ENCODE measurements at regions of chr12 and their contacts with region 1.

Region 1: GRCh38 chr12:104215638-104216297 is at the start of gene TXNRD1:
- DNase-seq: peak; percentile 97
- H3K4me3 ChIP-seq: peak within 1 kb of the TSS; percentile 41 to 78 (median 53)
- H3K27ac ChIP-seq: peak within 1 kb of the TSS; percentile 71 to 85 (median 76)
- H3K4me1 ChIP-seq: peaks cover 13 to 40% (median 28%) of the 10 kb centered on the region in 6 donors
- H3K27me3 ChIP-seq: peaks cover 0 to 7% (median 0%) of the 10 kb centered on the region in 7 donors
- CTCF ChIP-seq: peak; percentile 75 to 96 (median 89)
- POLR2A ChIP-seq: no peak
- total RNA-seq, gene TXNRD1: 45.8 to 107 (median 81.6) TPM

Region 2: GRCh38 chr12:104182144-104182543 is 33.6 kb before region 1 on chr12:
- intact Hi-C with region 1: no loop called
- DNase-seq: no peak
- H3K4me3 ChIP-seq: no peak overlapping the region
- H3K27ac ChIP-seq: peak overlapping the region in 3 of 8 donors; percentile 13 to 70 (median 22)
- H3K4me1 ChIP-seq: peaks cover 0 to 15% (median 2%) of the 10 kb centered on the region in 6 donors
- H3K27me3 ChIP-seq: peaks cover 0 to 10% (median 0%) of the 10 kb centered on the region in 7 donors
- CTCF ChIP-seq: no peak
- POLR2A ChIP-seq: no peak

Region 3: DNA sequence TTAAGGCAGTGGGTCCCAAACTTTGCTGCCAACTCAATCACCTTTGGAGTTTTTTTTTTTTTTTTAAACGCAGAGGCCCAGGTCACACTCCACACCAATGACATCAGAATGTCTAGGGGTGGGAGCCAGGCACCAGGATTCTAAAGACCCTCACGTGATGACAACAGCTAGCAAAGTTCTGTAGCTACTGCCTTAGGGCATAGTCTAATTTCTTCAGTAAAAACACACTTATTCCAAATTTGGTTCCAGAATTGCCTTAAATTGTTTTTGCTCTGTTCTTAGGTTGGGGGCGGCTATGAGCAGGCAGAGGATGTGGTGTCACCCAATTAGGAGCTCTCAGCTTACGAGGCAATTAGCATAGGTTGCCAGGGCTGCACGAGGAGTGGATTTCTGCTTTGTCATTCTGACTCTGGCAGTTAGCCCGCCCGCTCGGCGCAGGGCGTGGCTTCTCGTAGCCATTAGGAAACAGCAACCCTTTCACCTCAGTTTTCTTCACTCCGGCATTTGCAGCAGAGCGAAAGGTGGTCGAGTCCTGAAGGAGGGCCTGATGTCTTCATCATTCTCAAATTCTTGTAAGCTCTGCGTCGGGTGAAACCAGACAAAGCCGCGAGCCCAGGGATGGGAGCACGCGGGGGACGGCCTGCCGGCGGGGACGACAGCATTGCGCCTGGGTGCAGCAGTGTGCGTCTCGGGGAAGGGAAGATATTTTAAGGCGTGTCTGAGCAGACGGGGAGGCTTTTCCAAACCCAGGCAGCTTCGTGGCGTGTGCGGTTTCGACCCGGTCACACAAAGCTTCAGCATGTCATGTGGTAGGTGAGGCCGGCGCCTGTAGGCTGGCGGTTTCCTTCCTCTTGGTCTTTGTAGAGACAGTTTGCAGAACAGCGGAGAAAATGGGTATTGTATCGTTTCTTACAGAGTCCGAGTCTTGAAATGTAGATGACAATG is 71.0 kb after region 1 on chr12:
- intact Hi-C with region 1: loop called (anchors 10 kb)
- DNase-seq: peak; percentile 97
- H3K4me3 ChIP-seq: peak overlapping the region; percentile 56 to 97 (median 86)
- H3K27ac ChIP-seq: peak overlapping the region; percentile 67 to 99 (median 96)
- H3K4me1 ChIP-seq: peaks cover 24 to 50% (median 40%) of the 10 kb centered on the region in 6 donors
- H3K27me3 ChIP-seq: no peaks in the 10 kb centered on the region
- CTCF ChIP-seq: peak in 6 of 11 experiments; percentile 5 to 30 (median 22)
- POLR2A ChIP-seq: peak in 2 of 3 donors; percentile 8 to 60

Region 4: DNA sequence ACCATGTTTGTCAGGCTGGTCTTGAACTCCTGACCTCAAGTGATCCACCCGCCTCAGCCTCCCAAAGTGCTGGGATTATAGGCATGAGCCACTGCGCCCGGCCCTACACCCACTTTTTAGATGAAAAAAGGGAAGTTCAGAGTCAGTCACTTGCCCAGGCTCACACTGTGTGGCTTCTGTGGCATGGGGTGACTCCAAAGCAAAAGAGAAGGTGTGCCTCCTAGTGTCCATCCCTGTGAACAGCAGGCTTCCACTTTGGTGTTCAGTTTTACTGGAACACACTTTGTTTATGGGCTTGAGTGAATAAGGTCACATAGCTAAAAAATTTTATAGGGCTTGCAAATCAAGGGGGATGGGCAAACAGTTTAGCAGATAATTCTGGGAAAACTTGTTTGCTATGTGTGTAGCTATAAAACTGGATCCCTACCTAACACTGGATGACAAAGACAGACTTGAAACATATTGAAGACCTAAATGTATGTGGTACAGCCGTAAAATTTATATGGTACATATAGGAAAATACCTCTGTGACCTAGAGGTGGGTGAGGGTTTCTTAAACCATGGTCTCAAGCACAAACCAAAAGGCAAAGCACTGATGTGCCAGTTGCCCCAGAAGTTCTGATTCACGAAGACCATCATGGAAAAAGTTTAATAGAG is 142.7 kb after region 1 on chr12:
- intact Hi-C with region 1: loop called (anchors 5 kb)
- DNase-seq: peak; percentile 84
- H3K4me3 ChIP-seq: no peak overlapping the region
- H3K27ac ChIP-seq: no peak overlapping the region
- H3K4me1 ChIP-seq: peaks cover 0 to 14% (median 0%) of the 10 kb centered on the region in 6 donors
- H3K27me3 ChIP-seq: no peaks in the 10 kb centered on the region
- CTCF ChIP-seq: peak; percentile 73 to 92 (median 88)
- POLR2A ChIP-seq: no peak

Measured in spleen (tissue), 13 donors.